ENCODE measurements at regions of chr10 and their contacts with region 1.

Region 1: DNA sequence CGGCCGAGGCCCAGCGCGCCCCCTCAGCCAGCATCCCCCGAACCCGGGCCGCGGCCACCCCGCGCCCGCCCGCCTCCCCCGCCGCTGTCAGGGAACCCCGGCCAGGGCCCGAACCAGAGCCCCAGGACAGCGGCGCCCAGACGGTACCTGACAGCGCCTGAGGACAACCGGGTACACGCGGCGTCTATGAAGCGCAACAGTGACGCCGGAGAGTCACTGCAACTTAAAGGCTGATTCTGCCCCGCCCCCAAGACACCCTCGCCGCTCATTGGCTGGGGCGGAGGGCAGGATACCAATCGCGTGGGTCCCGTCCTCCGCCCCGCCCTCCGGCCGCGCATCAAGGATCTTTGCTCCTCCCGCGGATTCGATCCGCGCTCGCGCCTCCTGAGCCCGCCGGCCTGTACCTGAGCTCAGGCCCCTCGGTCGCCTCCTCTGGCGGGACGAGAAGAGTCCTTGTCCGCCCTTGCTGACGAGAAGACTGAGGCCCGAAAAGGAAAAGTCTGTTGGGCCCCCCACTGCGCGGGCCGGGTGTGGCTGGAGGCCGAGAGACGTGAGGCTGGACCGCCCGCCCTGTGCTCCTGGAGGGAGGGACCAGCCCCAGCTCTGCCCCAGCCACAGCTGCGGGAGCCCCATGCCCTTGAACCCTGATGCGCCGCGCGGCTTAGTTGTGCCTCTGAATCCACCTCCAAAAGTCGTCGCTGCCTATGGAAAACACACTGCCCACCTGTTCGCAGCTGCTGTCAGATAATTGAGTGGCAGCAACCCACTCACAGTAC is at the start of gene OAT:
- DNase-seq: peak; percentile 92 to 98
- H3K4me3 ChIP-seq: peak within 1 kb of the TSS; percentile 77 to 94
- H3K27ac ChIP-seq: peak within 1 kb of the TSS; percentile 95 to 97
- H3K4me1 ChIP-seq: peaks cover 4 to 30% of the 10 kb centered on the region in 2 donors
- H3K27me3 ChIP-seq: no peaks in the 10 kb centered on the region
- CTCF ChIP-seq: no peak
- total RNA-seq, gene OAT: 48.2 TPM

Region 2: GRCh38 chr10:123154092-123154921 is 1264.6 kb before region 1 on chr10 and contains the start of gene BUB3:
- intact Hi-C with region 1: loop called (anchors 10 kb)
- DNase-seq: peak; percentile 95 to 99
- H3K4me3 ChIP-seq: peak within 1 kb of the TSS; percentile 74 to 92
- H3K27ac ChIP-seq: peak within 1 kb of the TSS; percentile 75 to 90
- H3K4me1 ChIP-seq: peaks cover 8 to 19% of the 10 kb centered on the region in 2 donors
- H3K27me3 ChIP-seq: peaks cover 16% of the 10 kb centered on the region
- CTCF ChIP-seq: peak in 2 of 3 experiments; percentile 5 to 30
- total RNA-seq, gene BUB3: 12.2 TPM

Region 3: GRCh38 chr10:123678376-123678775 is 740.5 kb before region 1 on chr10:
- intact Hi-C with region 1: no loop called
- DNase-seq: no peak
- H3K4me3 ChIP-seq: no peak overlapping the region
- H3K27ac ChIP-seq: no peak overlapping the region
- H3K4me1 ChIP-seq: no peaks in the 10 kb centered on the region
- H3K27me3 ChIP-seq: no peaks in the 10 kb centered on the region
- CTCF ChIP-seq: no peak

Region 4: DNA sequence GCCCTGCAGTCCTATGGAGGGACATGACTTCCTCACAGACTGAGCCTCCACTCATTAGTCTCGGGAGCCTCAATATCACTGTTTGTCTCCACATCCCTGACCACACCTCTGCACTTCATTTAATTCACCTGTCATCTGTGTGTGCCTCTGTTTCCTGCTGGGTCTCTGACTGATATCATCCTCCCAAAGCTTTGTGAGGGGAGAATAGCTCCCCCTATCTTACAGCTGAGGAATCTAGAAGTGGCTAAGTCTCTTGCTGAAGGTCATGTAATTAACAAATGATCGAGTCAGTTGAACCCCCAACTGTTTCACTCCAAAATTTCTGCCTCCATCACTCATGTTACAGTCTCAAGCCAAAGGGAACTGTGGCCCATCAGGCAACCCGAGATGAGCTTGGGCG is 521.8 kb before region 1 on chr10:
- intact Hi-C with region 1: loop called (anchors 10 kb)
- DNase-seq: no peak
- H3K4me3 ChIP-seq: no peak overlapping the region
- H3K27ac ChIP-seq: no peak overlapping the region
- H3K4me1 ChIP-seq: peaks cover 0 to under 1% of the 10 kb centered on the region in 2 donors
- H3K27me3 ChIP-seq: no peaks in the 10 kb centered on the region
- CTCF ChIP-seq: peak in 1 of 3 experiments; percentile 30

Region 5: DNA sequence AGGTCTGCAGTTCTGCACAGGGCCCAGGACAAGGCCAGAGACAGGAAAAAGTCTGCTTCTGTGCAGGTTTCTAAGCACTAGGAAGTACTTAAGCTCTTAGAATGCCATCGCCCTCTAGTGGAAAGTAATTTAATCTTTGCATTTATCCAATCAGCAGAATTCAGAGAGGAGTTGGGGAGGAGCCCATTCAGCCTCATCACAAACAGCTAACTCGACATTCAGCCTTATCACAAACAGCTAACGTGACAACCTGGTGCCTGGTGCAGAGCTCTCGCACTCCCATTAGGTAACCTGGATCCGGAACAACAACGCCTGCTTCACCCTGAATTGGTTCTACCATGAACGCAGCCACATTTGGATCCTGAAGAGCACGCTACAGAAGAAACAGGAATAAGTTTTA is 15.4 kb before region 1 on chr10:
- intact Hi-C with region 1: no loop called
- DNase-seq: no peak
- H3K4me3 ChIP-seq: no peak overlapping the region
- H3K27ac ChIP-seq: no peak overlapping the region
- H3K4me1 ChIP-seq: no peaks in the 10 kb centered on the region
- H3K27me3 ChIP-seq: no peaks in the 10 kb centered on the region
- CTCF ChIP-seq: peak in 2 of 3 experiments; percentile 41 to 52

Region 6: GRCh38 chr10:124461438-124462347 is 42.8 kb after region 1 on chr10 and contains the start of gene LHPP:
- intact Hi-C with region 1: loop called (anchors 2 kb)
- DNase-seq: peak; percentile 24 to 91
- H3K4me3 ChIP-seq: peak within 1 kb of the TSS; percentile 78 to 96
- H3K27ac ChIP-seq: peak within 1 kb of the TSS; percentile 64 to 93
- H3K4me1 ChIP-seq: no peaks in the 10 kb centered on the region
- H3K27me3 ChIP-seq: no peaks in the 10 kb centered on the region
- CTCF ChIP-seq: peak; percentile 22 to 54 (median 41)
- total RNA-seq, gene LHPP: 5.1 TPM

Region 7: GRCh38 chr10:124916585-124917427 is 497.9 kb after region 1 on chr10:
- intact Hi-C with region 1: loop called (anchors 5 kb)
- DNase-seq: peak; percentile 91 to 99
- H3K4me3 ChIP-seq: peak overlapping the region; percentile 95 to 96
- H3K27ac ChIP-seq: peak overlapping the region; percentile 98
- H3K4me1 ChIP-seq: peaks cover 3 to 29% of the 10 kb centered on the region in 2 donors
- H3K27me3 ChIP-seq: no peaks in the 10 kb centered on the region
- CTCF ChIP-seq: peak in 1 of 3 experiments; percentile 6

Region 8: DNA sequence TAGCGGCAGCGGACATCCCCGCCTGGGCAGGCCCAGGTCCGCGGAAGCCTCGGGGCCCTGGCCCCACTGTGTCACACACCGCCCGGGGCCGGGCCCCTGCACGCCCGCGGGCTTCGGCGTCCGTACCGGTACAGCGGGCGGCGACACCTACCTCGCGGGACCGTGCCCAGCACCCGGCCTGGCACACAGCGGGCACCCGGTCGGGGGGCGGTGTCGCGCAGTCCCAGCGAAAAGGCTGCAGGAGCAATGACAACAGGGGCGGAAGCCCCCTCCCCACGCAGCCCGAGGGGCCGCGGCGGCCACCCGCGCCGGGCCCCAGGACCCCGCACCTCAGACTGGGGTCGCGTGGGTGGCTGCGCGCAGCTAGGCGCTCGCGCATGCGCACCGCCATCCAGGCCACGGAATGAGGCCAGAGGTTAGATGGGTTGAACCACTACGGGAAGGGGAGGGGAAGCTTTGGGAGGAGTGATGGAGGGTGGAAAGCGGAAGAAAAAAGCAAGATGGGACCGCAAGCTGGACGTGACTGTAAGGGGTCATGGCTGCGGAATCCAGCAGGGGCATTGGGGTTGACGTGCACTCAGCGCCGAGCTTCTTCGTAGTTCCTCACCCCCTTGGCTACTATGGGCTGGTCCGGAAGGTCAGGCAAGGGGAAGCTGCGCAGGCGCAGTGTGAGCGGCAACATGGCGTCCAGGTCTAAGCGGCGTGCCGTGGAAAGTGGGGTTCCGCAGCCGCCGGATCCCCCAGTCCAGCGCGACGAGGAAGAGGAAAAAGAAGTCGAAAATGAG is 1404.2 kb after region 1 on chr10 and contains the starts of genes BCCIP and UROS:
- intact Hi-C with region 1: loop called (anchors 2 kb)
- DNase-seq: peak; percentile 56 to 93
- H3K4me3 ChIP-seq: peak within 1 kb of the TSS; percentile 76 to 81
- H3K27ac ChIP-seq: peak within 1 kb of the TSS; percentile 79 to 81
- H3K4me1 ChIP-seq: peaks cover 9 to 19% of the 10 kb centered on the region in 2 donors
- H3K27me3 ChIP-seq: no peaks in the 10 kb centered on the region
- CTCF ChIP-seq: peak in 1 of 3 experiments; percentile 8
- total RNA-seq, gene BCCIP: 4.7 TPM
- total RNA-seq, gene UROS: 38.1 TPM

Region 9: DNA sequence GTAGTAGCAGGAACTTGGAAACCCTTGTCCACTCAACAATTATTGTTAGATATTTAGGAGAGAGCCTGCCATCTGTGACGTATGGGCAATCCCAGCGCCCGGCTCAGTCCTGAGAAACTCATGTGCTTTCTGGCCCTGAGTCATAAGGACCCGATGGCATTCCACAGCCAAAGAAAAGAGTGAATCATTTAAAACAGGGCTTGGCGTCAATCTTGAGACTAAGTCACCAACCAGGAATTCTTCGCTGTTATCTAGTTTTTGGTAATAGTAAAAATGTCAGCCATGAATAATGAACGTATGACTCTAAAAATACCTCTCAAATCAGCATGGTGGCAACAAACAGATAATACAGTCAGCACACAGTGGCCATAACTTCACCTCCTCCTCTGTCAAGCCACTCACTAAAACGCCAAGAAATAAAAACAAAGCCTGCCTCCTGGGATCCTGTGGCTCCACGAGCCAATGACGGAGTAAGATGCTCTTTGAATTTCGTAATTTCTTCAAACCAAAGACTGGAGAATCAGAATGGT is 1828.6 kb after region 1 on chr10:
- intact Hi-C with region 1: loop called (anchors 5 kb)
- DNase-seq: peak; percentile 74 to 97
- H3K4me3 ChIP-seq: peak overlapping the region in 1 of 2 donors; percentile 16
- H3K27ac ChIP-seq: peak overlapping the region; percentile 69 to 79
- H3K4me1 ChIP-seq: peaks cover 0 to 12% of the 10 kb centered on the region in 2 donors
- H3K27me3 ChIP-seq: no peaks in the 10 kb centered on the region
- CTCF ChIP-seq: no peak

Measured in ascending aorta (tissue), 2 donors.